ENCODE measurements at regions of chr21 and their contacts with region 1.

Region 1: GRCh38 chr21:26437326-26438009 is 135.6 kb downstream of the CYYR1 start:
- DNase-seq: no peak
- H3K4me3 ChIP-seq: no peak overlapping the region
- H3K27ac ChIP-seq: no peak overlapping the region
- H3K4me1 ChIP-seq: no peaks in the 10 kb centered on the region
- H3K27me3 ChIP-seq: no peaks in the 10 kb centered on the region
- CTCF ChIP-seq: no peak

Region 2: GRCh38 chr21:26293141-26293946 is 144.1 kb before region 1 on chr21:
- CTCF ChIA-PET with region 1: no interaction called
- POLR2A ChIA-PET with region 1: interaction called, 11 read pairs
- intact Hi-C with region 1: no loop called
- DNase-seq: no peak
- H3K4me3 ChIP-seq: no peak overlapping the region
- H3K27ac ChIP-seq: no peak overlapping the region
- H3K4me1 ChIP-seq: no peaks in the 10 kb centered on the region
- H3K27me3 ChIP-seq: no peaks in the 10 kb centered on the region
- CTCF ChIP-seq: no peak

Region 3: GRCh38 chr21:26554365-26554764 is 116.9 kb after region 1 on chr21:
- CTCF ChIA-PET with region 1: no interaction called
- POLR2A ChIA-PET with region 1: no interaction called
- intact Hi-C with region 1: no loop called
- DNase-seq: no peak
- H3K4me3 ChIP-seq: no peak overlapping the region
- H3K27ac ChIP-seq: no peak overlapping the region
- H3K4me1 ChIP-seq: no peaks in the 10 kb centered on the region
- H3K27me3 ChIP-seq: no peaks in the 10 kb centered on the region
- CTCF ChIP-seq: no peak

Measured in PC-9 (cell line).